ENCODE measurements at regions of chr12 and their contacts with region 1.

Region 1: GRCh38 chr12:56839915-56840325 is 76.8 kb downstream of the HSD17B6 start:
- DNase-seq: peak; percentile 2
- H3K4me3 Mint-ChIP-seq: no peak overlapping the region
- H3K27ac Mint-ChIP-seq: no peak overlapping the region
- H3K4me1 Mint-ChIP-seq: peaks cover 14% of the 10 kb centered on the region
- H3K27me3 Mint-ChIP-seq: peaks cover 2% of the 10 kb centered on the region

Region 2: GRCh38 chr12:56759263-56759908 is 80.5 kb before region 1 on chr12:
- intact Hi-C with region 1: loop called (anchors 5 kb)
- DNase-seq: no peak
- H3K4me3 Mint-ChIP-seq: no peak overlapping the region
- H3K27ac Mint-ChIP-seq: no peak overlapping the region
- H3K4me1 Mint-ChIP-seq: peaks cover 4% of the 10 kb centered on the region
- H3K27me3 Mint-ChIP-seq: peaks cover 11% of the 10 kb centered on the region

Region 3: GRCh38 chr12:56987551-56988053 is 147.7 kb after region 1 on chr12:
- intact Hi-C with region 1: loop called (anchors 2 kb)
- DNase-seq: peak; percentile 54
- H3K4me3 Mint-ChIP-seq: no peak overlapping the region
- H3K27ac Mint-ChIP-seq: no peak overlapping the region
- H3K4me1 Mint-ChIP-seq: peaks cover 23% of the 10 kb centered on the region
- H3K27me3 Mint-ChIP-seq: peaks cover 3% of the 10 kb centered on the region

Measured in activated T-helper 1 cell treated with anti-CD3 and anti-CD28 coated beads, Interleukin-12 subunit alpha, Interleukin-12 subunit beta, Interleukin-2, Interleukin-4 antibody, amounts not matched to agents 30 ng/mL and 10 ng/mL and 1 ng/mL, durations not matched to agents 14 hours and 24 hours and 36 hours (primary cell).